Psoas muscle (tissue), 8 donors: ENCODE measurements at regions of chr15 and their contacts with region 1.

Region 1: GRCh38 chr15:88246666-88247446 is 9.7 kb downstream of the NTRK3 start:
- DNase-seq: peak; percentile 78 to 89
- ATAC-seq: peak; percentile 87 to 96 (median 92)
- H3K4me3 ChIP-seq: no peak overlapping the region
- H3K27ac ChIP-seq: no peak overlapping the region
- H3K4me1 ChIP-seq: peaks cover 10% of the 10 kb centered on the region
- H3K27me3 ChIP-seq: no peaks in the 10 kb centered on the region
- CTCF ChIP-seq: peak; percentile 97

Region 2: GRCh38 chr15:87672309-87673288 is 574.3 kb before region 1 on chr15:
- intact Hi-C with region 1: loop called in 1 of 2 experiments (anchors 5 kb)
- DNase-seq: no peak
- ATAC-seq: no peak
- H3K4me3 ChIP-seq: no peak overlapping the region
- H3K27ac ChIP-seq: no peak overlapping the region
- H3K4me1 ChIP-seq: no peaks in the 10 kb centered on the region
- H3K27me3 ChIP-seq: no peaks in the 10 kb centered on the region
- CTCF ChIP-seq: peak; percentile 47

Region 3: GRCh38 chr15:87874896-87875711 is 371.8 kb before region 1 on chr15:
- intact Hi-C with region 1: loop called in 1 of 2 experiments (anchors 10 kb)
- DNase-seq: peak in 1 of 2 donors; percentile 59
- ATAC-seq: no peak
- H3K4me3 ChIP-seq: no peak overlapping the region
- H3K27ac ChIP-seq: no peak overlapping the region
- H3K4me1 ChIP-seq: no peaks in the 10 kb centered on the region
- H3K27me3 ChIP-seq: no peaks in the 10 kb centered on the region
- CTCF ChIP-seq: no peak

Region 4: GRCh38 chr15:88208410-88208809 is 38.4 kb before region 1 on chr15:
- intact Hi-C with region 1: no loop called
- DNase-seq: no peak
- ATAC-seq: no peak
- H3K4me3 ChIP-seq: no peak overlapping the region
- H3K27ac ChIP-seq: no peak overlapping the region
- H3K4me1 ChIP-seq: no peaks in the 10 kb centered on the region
- H3K27me3 ChIP-seq: no peaks in the 10 kb centered on the region
- CTCF ChIP-seq: no peak